Activated B cell treated with CpG ODN at 0.5 μM for 24 hours (primary cell): ENCODE measurements at regions of chr16 and their contacts with region 1.

Region 1: DNA sequence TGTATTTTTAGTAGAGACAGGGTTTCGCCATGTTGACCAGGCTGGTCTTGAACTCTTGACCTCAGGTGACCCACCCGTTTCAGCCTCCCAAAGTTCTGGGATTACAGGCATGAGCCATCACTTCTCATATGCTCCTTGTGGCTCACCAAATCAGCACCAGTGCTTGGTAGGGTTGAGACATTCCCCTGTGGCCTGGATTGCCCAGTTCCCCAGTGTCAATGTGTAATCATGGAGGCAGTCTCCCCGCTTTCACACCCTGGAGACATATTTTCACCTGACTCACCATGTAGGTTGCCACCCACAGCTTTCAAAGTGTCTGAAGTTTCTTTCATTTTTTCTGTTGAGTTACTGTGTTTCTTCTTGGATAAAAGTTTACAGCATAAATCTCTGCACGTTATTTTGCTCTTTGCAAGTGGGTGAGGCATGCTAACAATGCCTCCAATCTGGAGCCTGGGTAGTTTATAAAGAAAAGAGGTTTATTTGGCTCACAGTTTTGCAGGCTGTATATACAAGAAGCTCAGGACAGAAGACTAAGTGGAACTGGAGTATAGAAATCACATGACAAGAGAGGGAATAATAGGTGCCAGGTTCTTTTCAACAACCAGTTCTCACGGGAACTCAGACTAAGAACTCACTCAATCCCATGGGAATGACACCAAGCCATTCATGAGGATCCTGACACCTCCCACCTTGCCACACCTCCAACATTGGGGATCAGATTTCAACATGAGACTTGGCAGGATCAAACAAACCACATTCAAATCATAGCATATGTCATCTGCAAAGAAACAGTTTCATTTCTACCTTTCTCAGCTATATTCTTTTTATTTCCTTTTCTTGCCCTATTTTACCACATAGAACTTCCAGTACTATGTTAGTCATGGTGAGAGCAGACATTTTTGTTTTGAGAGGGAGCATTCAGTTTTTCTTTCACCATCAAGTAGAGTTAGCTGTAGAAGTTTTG is 113.2 kb downstream of the PHKB start:
- DNase-seq: no peak
- ATAC-seq: peak; percentile 21
- H3K4me3 Mint-ChIP-seq: peak overlapping the region; percentile 25
- H3K27ac Mint-ChIP-seq: peak overlapping the region; percentile 74
- H3K4me1 Mint-ChIP-seq: peaks cover 44% of the 10 kb centered on the region
- H3K27me3 Mint-ChIP-seq: no peaks in the 10 kb centered on the region
- CTCF ChIP-seq: no peak

Region 2: DNA sequence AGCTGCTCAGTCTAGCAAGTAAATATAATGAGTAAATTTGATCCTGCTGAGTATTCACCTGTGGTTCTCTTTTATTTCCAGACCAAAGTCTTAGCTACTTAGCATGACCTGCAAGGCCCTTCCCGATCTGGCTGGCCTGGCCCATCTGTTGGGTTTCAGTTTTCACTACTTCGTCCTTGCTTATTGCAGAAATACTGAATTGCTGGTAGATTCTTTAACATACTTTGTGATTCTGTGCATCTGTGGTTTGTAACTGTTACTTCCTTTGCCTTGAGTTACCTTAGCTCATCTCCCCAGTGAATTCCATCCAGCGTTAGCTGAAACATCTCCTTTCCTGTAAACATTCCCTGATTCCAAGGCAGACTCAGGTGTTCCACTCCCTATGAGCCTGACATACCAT is 17.9 kb after region 1 on chr16:
- CTCF ChIA-PET with region 1: no interaction called
- POLR2A ChIA-PET with region 1: no interaction called
- intact Hi-C with region 1: loop called (anchors 2 kb)
- DNase-seq: no peak
- ATAC-seq: no peak
- H3K4me3 Mint-ChIP-seq: no peak overlapping the region
- H3K27ac Mint-ChIP-seq: no peak overlapping the region
- H3K4me1 Mint-ChIP-seq: no peaks in the 10 kb centered on the region
- H3K27me3 Mint-ChIP-seq: no peaks in the 10 kb centered on the region
- CTCF ChIP-seq: no peak